ENCODE measurements at regions of chr4 and their contacts with region 1.

Region 1: GRCh38 chr4:154618708-154619315 is 6.4 kb upstream of the FGG start:
- DNase-seq: peak in 7 of 9 donors; percentile 25 to 51 (median 39)
- ATAC-seq: peak; percentile 76
- H3K4me3 ChIP-seq: no peak overlapping the region
- H3K4me3 Mint-ChIP-seq: no peak overlapping the region
- H3K27ac ChIP-seq: no peak overlapping the region
- H3K27ac Mint-ChIP-seq: peak overlapping the region in 1 of 9 donors; percentile 21
- H3K4me1 ChIP-seq: no peaks in the 10 kb centered on the region
- H3K4me1 Mint-ChIP-seq: peaks cover 0 to 18% (median 5%) of the 10 kb centered on the region in 7 donors
- H3K27me3 ChIP-seq: no peaks in the 10 kb centered on the region
- H3K27me3 Mint-ChIP-seq: peaks cover 0 to 23% (median 4%) of the 10 kb centered on the region in 5 donors

Region 2: GRCh38 chr4:154559494-154560418 is 59.1 kb before region 1 on chr4:
- CTCF ChIA-PET with region 1: interaction called, 4 read pairs
- POLR2A ChIA-PET with region 1: no interaction called
- intact Hi-C with region 1: loop called in 1 of 2 experiments (anchors 1 kb)
- DNase-seq: no peak
- ATAC-seq: peak; percentile 48
- H3K4me3 ChIP-seq: no peak overlapping the region
- H3K4me3 Mint-ChIP-seq: no peak overlapping the region
- H3K27ac ChIP-seq: no peak overlapping the region
- H3K27ac Mint-ChIP-seq: no peak overlapping the region
- H3K4me1 ChIP-seq: no peaks in the 10 kb centered on the region
- H3K4me1 Mint-ChIP-seq: peaks cover 0 to 4% (median 0%) of the 10 kb centered on the region in 7 donors
- H3K27me3 ChIP-seq: no peaks in the 10 kb centered on the region
- H3K27me3 Mint-ChIP-seq: peaks cover 0 to 17% (median 13%) of the 10 kb centered on the region in 5 donors